ENCODE measurements at regions of chr1 and their contacts with region 1.

Region 1: GRCh38 chr1:208093754-208094719 is 150.1 kb downstream of the PLXNA2 start:
- DNase-seq: peak; percentile 37
- H3K4me3 ChIP-seq: no peak overlapping the region
- H3K27ac ChIP-seq: peak overlapping the region; percentile 33
- H3K4me1 ChIP-seq: no peaks in the 10 kb centered on the region
- H3K27me3 ChIP-seq: no peaks in the 10 kb centered on the region
- CTCF ChIP-seq: peak; percentile 81 to 84

Region 2: DNA sequence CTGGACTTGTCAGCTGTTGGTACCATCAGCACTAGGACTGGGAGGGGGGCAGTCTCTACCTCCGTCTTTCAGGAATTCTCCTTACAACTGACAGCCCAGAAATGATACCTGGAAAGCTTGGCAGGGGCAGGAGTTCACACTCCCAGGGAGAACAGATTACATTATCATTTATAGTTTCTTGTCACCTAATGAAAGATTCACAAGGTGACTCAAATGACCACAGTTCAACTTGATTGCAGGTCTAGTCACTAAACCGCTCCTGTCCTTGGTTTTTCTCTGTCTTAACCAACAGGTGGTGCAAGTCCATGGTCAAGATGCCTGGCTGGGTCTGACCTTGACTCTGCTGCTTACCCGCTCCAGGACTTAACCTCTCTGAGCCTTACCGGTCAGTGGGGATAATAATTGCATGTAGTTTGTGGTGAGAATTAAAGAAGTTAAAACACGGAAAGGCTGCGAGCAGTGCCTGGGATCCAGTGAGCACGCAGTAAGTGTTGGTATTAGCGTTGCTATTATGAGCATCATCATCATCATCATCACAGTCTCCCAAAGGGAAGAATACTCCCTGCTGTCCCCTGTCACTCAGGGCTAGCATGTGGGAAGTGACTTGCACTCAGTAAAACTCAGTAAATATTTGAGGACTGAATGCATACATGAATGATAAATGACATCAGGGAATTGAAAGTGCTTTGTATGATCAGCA is 57.8 kb before region 1 on chr1:
- CTCF ChIA-PET with region 1: no interaction called
- dilution Hi-C with region 1: no loop called
- in situ Hi-C with region 1: no loop called
- intact Hi-C with region 1: loop called (anchors 2 kb)
- DNase-seq: no peak
- H3K4me3 ChIP-seq: no peak overlapping the region
- H3K27ac ChIP-seq: no peak overlapping the region
- H3K4me1 ChIP-seq: no peaks in the 10 kb centered on the region
- H3K27me3 ChIP-seq: no peaks in the 10 kb centered on the region
- CTCF ChIP-seq: peak in 1 of 2 donors; percentile 26